ENCODE measurements at regions of chr10 and their contacts with region 1.

Region 1: DNA sequence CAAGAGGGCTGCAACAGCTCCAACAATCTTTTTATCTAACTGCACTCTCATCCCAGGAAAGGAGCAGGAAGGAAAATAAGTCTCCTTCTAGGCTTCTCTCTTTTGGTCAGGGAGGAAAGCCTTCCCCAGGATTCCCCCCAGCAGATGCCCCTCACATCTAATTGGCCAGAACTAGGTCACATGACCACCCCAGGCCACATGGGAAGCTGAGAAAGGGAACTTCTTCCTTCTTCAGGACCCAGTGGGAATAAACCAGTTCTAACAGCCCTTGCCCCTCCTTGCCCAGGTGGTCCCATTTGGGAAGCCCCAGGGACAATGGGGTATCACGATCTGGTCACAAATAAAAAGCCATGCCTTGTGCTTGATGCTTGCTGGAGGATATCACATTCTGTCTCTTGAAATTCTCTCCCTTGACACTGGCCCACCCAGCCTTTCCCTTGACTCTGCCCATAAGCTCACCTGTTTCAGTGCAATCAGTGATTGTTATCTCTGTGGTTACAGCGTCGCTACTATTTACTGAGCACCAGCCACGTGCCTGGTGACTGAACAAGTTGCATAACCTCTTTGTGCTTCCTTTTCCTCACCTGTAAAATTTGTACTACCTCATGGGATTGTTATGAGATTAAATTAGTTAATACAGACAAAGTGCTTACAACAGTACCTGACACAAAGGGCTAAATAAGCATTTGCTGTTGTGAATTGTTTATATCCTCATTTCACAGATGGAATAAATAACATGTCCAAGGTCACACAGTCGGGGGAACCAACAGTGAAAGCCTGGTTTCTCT is 9.0 kb upstream of the TACR2 start:
- DNase-seq: peak; percentile 88 to 89
- H3K4me3 ChIP-seq: no peak overlapping the region
- H3K4me3 Mint-ChIP-seq: peak overlapping the region; percentile 47
- H3K27ac Mint-ChIP-seq: peak overlapping the region; percentile 84
- H3K4me1 ChIP-seq: peaks cover 24% of the 10 kb centered on the region
- H3K4me1 Mint-ChIP-seq: peaks cover 26% of the 10 kb centered on the region
- H3K27me3 ChIP-seq: no peaks in the 10 kb centered on the region
- H3K27me3 Mint-ChIP-seq: no peaks in the 10 kb centered on the region
- CTCF ChIP-seq: no peak

Region 2: DNA sequence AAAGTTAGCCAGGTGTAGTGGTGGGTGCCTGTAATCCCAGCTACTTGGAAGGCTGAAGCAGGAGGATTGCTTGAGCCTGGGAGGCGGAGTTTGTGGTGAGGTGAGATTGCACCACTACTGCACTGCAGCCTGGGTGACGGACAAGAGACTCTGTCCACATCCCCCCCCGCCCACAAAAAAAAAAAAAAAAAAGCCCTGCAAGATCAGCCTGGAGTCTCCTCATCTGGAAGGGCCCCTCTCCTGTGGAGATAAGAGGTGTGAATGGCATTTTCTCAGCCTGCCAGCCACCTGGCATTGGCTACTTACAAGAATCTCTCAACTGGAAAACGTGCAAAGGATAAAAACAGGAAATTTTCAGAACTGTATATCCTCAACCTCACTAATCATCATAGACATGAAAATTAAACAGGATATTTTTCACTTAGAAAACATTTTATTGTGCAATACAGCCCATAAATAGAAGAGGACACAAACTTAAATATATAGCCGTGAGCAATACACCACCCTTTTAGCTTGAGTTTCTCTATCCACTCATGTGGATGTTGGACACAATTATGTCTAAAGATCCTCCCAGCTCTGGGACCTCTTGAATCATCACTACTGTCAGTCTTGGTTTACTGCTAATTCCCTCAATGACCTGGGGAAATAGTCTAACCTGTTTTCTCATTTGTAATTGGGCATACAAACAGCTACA is 14.3 kb after region 1 on chr10:
- CTCF ChIA-PET with region 1: interaction called, 7 read pairs
- POLR2A ChIA-PET with region 1: interaction called, 3 read pairs
- intact Hi-C with region 1: loop called (anchors 1 kb)
- DNase-seq: peak; percentile 85 to 91
- H3K4me3 ChIP-seq: no peak overlapping the region
- H3K4me3 Mint-ChIP-seq: peak overlapping the region; percentile 56
- H3K27ac Mint-ChIP-seq: peak overlapping the region; percentile 86
- H3K4me1 ChIP-seq: peaks cover 36% of the 10 kb centered on the region
- H3K4me1 Mint-ChIP-seq: peaks cover 44% of the 10 kb centered on the region
- H3K27me3 ChIP-seq: no peaks in the 10 kb centered on the region
- H3K27me3 Mint-ChIP-seq: no peaks in the 10 kb centered on the region
- CTCF ChIP-seq: no peak

Region 3: GRCh38 chr10:69451209-69451783 is 25.6 kb after region 1 on chr10 and contains the start of gene TSPAN15:
- CTCF ChIA-PET with region 1: interaction called, 7 read pairs
- POLR2A ChIA-PET with region 1: interaction called, 11 read pairs
- intact Hi-C with region 1: loop called (anchors 1 kb)
- DNase-seq: peak; percentile 97 to 99
- H3K4me3 ChIP-seq: peak within 1 kb of the TSS; percentile 74
- H3K4me3 Mint-ChIP-seq: peak within 1 kb of the TSS; percentile 78
- H3K27ac Mint-ChIP-seq: peak within 1 kb of the TSS; percentile 81
- H3K4me1 ChIP-seq: peaks cover 44% of the 10 kb centered on the region
- H3K4me1 Mint-ChIP-seq: peaks cover 45% of the 10 kb centered on the region
- H3K27me3 ChIP-seq: no peaks in the 10 kb centered on the region
- H3K27me3 Mint-ChIP-seq: no peaks in the 10 kb centered on the region
- CTCF ChIP-seq: peak in 1 of 2 experiments; percentile 38
- total RNA-seq, gene TSPAN15: 86.5 and 89.0 TPM in 2 replicates

Region 4: DNA sequence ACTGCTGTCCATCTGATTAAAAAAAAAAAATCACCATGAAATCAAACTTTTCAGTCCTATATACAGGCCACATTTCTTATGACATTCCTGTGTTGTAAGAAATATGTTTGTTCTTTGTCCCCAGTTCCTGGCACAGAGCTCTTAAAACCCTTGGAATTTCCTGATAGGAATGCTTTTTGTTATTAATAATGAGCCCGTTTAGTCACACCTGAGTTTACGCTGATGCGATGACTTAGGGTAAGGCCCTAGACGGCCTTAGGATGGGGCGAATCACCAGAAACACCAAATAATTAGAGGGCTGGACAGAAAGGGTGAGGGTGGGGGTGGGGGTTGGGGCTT is 43.0 kb after region 1 on chr10:
- CTCF ChIA-PET with region 1: interaction called, 3 read pairs
- POLR2A ChIA-PET with region 1: no interaction called
- intact Hi-C with region 1: loop called (anchors 1 kb)
- DNase-seq: peak in 1 of 2 experiments; percentile 35
- H3K4me3 ChIP-seq: no peak overlapping the region
- H3K4me3 Mint-ChIP-seq: no peak overlapping the region
- H3K27ac Mint-ChIP-seq: peak overlapping the region; percentile 49
- H3K4me1 ChIP-seq: peaks cover 28% of the 10 kb centered on the region
- H3K4me1 Mint-ChIP-seq: peaks cover 9% of the 10 kb centered on the region
- H3K27me3 ChIP-seq: no peaks in the 10 kb centered on the region
- H3K27me3 Mint-ChIP-seq: no peaks in the 10 kb centered on the region
- CTCF ChIP-seq: no peak

Region 5: DNA sequence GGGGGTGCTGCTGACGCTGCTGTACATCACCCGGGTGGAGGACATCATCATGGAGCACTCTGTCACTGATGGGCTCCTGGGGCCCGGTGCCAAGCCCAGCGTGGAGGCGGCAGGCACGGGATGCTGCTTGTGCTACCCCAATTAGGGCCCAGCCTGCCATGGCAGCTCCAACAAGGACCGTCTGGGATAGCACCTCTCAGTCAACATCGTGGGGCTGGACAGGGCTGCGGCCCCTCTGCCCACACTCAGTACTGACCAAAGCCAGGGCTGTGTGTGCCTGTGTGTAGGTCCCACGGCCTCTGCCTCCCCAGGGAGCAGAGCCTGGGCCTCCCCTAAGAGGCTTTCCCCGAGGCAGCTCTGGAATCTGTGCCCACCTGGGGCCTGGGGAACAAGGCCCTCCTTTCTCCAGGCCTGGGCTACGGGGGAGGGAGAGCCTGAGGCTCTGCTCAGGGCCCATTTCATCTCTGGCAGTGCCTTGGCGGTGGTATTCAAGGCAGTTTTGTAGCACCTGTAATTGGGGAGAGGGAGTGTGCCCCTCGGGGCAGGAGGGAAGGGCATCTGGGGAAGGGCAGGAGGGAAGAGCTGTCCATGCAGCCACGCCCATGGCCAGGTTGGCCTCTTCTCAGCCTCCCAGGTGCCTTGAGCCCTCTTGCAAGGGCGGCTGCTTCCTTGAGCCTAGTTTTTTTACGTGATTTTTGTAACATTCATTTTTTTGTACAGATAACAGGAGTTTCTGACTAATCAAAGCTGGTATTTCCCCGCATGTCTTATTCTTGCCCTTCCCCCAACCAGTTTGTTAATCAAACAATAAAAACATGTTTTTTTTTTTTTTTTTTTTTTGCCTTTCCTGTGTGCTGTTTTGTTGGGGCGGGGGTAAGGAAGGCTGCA is 81.4 kb after region 1 on chr10:
- CTCF ChIA-PET with region 1: interaction called, 3 read pairs
- POLR2A ChIA-PET with region 1: no interaction called
- intact Hi-C with region 1: loop called (anchors 1 kb)
- DNase-seq: peak in 1 of 2 experiments; percentile 44
- H3K4me3 ChIP-seq: no peak overlapping the region
- H3K4me3 Mint-ChIP-seq: no peak overlapping the region
- H3K27ac Mint-ChIP-seq: no peak overlapping the region
- H3K4me1 ChIP-seq: peaks cover 5% of the 10 kb centered on the region
- H3K4me1 Mint-ChIP-seq: no peaks in the 10 kb centered on the region
- H3K27me3 ChIP-seq: no peaks in the 10 kb centered on the region
- H3K27me3 Mint-ChIP-seq: no peaks in the 10 kb centered on the region
- CTCF ChIP-seq: no peak

Region 6: DNA sequence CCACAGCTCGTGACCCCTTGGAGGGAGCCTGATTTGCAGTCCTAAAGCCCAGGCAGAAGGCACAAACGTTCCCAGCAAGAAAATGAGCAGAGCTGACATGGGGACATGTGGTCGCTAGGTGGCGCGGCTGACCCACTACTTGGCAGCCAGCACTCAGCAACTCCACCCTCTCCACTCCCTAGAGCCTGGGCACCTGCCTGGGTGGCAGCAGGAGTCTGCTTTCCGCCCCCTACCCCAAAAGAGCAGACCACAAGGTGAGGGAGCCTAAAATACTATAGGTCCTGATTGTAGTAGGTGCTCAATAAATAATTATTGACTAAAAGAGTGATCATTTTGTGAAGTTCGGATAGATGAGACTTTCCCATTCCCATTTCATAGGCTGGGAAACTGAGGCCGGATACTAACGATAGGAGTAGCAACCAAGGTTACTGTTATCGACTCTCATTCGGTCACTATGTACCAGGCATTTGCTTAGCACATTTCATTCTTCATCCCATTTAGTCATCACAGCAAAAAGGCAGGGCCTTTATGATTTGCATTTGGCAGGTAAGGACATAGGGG is 90.1 kb after region 1 on chr10:
- CTCF ChIA-PET with region 1: interaction called, 10 read pairs
- POLR2A ChIA-PET with region 1: no interaction called
- intact Hi-C with region 1: no loop called
- DNase-seq: peak; percentile 82 to 88
- H3K4me3 ChIP-seq: no peak overlapping the region
- H3K4me3 Mint-ChIP-seq: no peak overlapping the region
- H3K27ac Mint-ChIP-seq: no peak overlapping the region
- H3K4me1 ChIP-seq: no peaks in the 10 kb centered on the region
- H3K4me1 Mint-ChIP-seq: no peaks in the 10 kb centered on the region
- H3K27me3 ChIP-seq: no peaks in the 10 kb centered on the region
- H3K27me3 Mint-ChIP-seq: no peaks in the 10 kb centered on the region
- CTCF ChIP-seq: peak; percentile 97 to 99

Region 7: GRCh38 chr10:69639291-69640195 is 213.8 kb after region 1 on chr10:
- CTCF ChIA-PET with region 1: interaction called, 4 read pairs
- POLR2A ChIA-PET with region 1: no interaction called
- intact Hi-C with region 1: loop called (anchors 1 kb)
- DNase-seq: peak; percentile 83 to 85
- H3K4me3 ChIP-seq: no peak overlapping the region
- H3K4me3 Mint-ChIP-seq: no peak overlapping the region
- H3K27ac Mint-ChIP-seq: no peak overlapping the region
- H3K4me1 ChIP-seq: no peaks in the 10 kb centered on the region
- H3K4me1 Mint-ChIP-seq: no peaks in the 10 kb centered on the region
- H3K27me3 ChIP-seq: 0 out of 2 replicates have a peak, but pooled peaks cover 1% of the 10 kb centered on the region
- H3K27me3 Mint-ChIP-seq: peaks cover 7% of the 10 kb centered on the region
- CTCF ChIP-seq: peak; percentile 97 to 99

Measured in Caco-2 (cell line).